ENCODE measurements at regions of chr1 and their contacts with region 1.

Region 1: DNA sequence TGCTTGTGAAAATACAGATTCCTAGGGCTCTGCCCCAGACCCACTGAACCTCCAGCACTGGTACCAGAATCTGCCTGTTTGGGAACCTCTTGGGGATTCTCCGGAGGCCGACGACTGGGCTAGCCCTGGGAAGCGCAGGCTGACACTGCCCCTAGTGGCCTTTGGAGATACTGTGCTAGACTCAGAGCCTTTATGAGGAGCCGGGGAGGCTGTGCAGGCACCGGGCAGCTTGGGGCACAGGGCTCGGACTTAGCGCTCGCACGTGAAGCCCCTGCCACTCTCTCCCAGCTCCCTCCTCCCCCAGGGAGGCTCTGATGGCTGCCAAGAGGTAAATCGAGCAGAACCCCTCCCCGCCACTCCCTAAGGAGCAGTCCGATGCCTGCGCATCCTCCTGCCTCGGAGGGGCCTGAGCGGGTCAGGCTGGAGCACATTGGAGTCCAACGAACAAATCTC is 144.6 kb upstream of the TNR start:
- DNase-seq: peak; percentile 16 to 81
- H3K4me3 ChIP-seq: no peak overlapping the region
- CTCF ChIP-seq: no peak
- POLR2A ChIP-seq: no peak

Region 2: DNA sequence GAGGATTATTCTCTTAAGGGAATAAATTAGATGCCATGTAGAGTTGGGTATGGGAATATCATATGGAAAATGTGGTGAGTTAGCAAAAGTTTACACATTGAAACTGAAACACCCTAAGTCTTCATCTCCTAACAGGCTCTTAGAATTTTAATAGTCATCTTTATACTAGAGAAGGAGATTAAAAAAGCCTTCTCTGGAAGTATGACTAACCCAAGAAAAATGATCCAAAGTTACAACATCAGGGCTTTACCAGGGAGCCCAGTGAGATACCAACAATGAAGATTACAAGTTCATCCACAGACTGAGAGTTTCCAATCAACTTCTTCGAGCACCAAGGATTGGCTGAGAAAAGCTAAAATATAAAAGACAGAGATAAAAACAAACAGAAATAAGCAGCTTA is 625.4 kb before region 1 on chr1:
- intact Hi-C with region 1: no loop called
- DNase-seq: no peak
- H3K4me3 ChIP-seq: no peak overlapping the region
- CTCF ChIP-seq: no peak
- POLR2A ChIP-seq: no peak

Region 3: GRCh38 chr1:175612286-175612685 is 275.7 kb before region 1 on chr1:
- intact Hi-C with region 1: no loop called
- DNase-seq: no peak
- H3K4me3 ChIP-seq: no peak overlapping the region
- CTCF ChIP-seq: no peak
- POLR2A ChIP-seq: no peak

Region 4: DNA sequence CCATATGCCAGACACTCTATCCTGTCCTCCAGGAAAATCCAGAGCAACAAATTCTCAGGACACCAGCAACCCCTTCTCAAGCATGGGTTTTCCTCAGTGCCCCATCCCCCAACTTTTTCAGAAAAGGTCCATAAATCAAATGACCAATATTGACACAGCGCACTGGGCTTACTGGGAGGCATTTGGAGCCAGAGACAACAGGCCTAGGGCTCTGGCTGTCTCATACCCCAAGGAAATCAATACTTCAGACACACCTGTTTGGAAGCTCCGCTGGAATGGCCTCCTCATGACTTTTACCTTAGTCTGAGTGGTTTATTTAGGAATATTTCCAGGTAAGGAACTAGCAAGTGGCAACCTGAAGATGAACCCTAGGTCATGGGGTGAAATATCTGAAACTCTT is 77.7 kb before region 1 on chr1:
- intact Hi-C with region 1: loop called (anchors 2 kb)
- DNase-seq: no peak
- H3K4me3 ChIP-seq: no peak overlapping the region
- CTCF ChIP-seq: no peak
- POLR2A ChIP-seq: no peak

Measured in lower leg skin (tissue), 4 donors.